ENCODE measurements at regions of chr12 and their contacts with region 1.

Region 1: GRCh38 chr12:12384571-12385340 is 27.9 kb downstream of the BORCS5 start:
- DNase-seq: peak; percentile 13 to 41 (median 16)
- ATAC-seq: peak; percentile 71
- H3K4me3 ChIP-seq: no peak overlapping the region
- H3K27ac ChIP-seq: no peak overlapping the region
- H3K4me1 ChIP-seq: peaks cover 3 to 13% of the 10 kb centered on the region in 2 experiments; a peak in 3 of 5 replicates
- H3K27me3 ChIP-seq: no peaks in the 10 kb centered on the region
- CTCF ChIP-seq: no peak
- EP300 ChIP-seq: no peak
- POLR2A ChIP-seq: no peak
- RAD21 ChIP-seq: no peak

Region 2: GRCh38 chr12:12491606-12492005 is 106.8 kb after region 1 on chr12:
- CTCF ChIA-PET with region 1: no interaction called
- POLR2A ChIA-PET with region 1: no interaction called
- in situ Hi-C with region 1: no loop called
- intact Hi-C with region 1: loop called (anchors 10 kb)
- DNase-seq: peak in 1 of 4 experiments; percentile 4
- ATAC-seq: no peak
- H3K4me3 ChIP-seq: no peak overlapping the region
- H3K27ac ChIP-seq: no peak overlapping the region
- H3K4me1 ChIP-seq: peaks cover 0 to 16% of the 10 kb centered on the region in 2 experiments; a peak in 3 of 5 replicates
- H3K27me3 ChIP-seq: no peaks in the 10 kb centered on the region
- CTCF ChIP-seq: no peak
- EP300 ChIP-seq: no peak
- POLR2A ChIP-seq: no peak
- RAD21 ChIP-seq: no peak